AG04449 (cell line): ENCODE measurements at regions of chr12 and their contacts with region 1.

Region 1: GRCh38 chr12:49644620-49644994 is 21.2 kb downstream of the PRPF40B start:
- DNase-seq: no peak
- H3K4me3 ChIP-seq: no peak overlapping the region
- CTCF ChIP-seq: peak; percentile 88

Region 2: DNA sequence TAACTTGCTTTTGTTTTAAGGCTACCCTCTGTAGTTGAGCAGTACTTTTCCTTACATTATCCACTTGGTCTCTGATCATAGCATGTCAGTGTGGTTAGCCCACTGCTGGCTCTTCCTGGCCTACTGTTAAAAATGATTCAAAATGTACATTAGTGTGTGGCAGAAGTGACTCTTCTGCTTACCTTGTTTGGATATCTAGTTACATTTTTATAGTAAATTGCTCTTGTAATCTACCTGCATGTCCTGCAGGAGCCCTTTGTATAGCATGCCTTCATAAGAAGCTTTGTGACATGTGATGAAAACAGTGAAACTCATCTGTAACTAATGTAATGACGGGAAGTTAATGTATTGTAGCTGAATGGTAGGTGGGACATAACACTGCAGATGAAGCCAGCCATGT is 269.2 kb before region 1 on chr12:
- CTCF ChIA-PET with region 1: no interaction called
- POLR2A ChIA-PET with region 1: no interaction called
- DNase-seq: no peak
- H3K4me3 ChIP-seq: no peak overlapping the region
- CTCF ChIP-seq: no peak

Region 3: GRCh38 chr12:49655595-49656236 is 11.1 kb after region 1 on chr12:
- CTCF ChIA-PET with region 1: interaction called, 300 read pairs
- POLR2A ChIA-PET with region 1: no interaction called
- DNase-seq: no peak
- H3K4me3 ChIP-seq: no peak overlapping the region
- CTCF ChIP-seq: no peak

Region 4: GRCh38 chr12:49673446-49674317 is 29.1 kb after region 1 on chr12:
- CTCF ChIA-PET with region 1: interaction called, 20 read pairs
- POLR2A ChIA-PET with region 1: interaction called, 5 read pairs
- DNase-seq: no peak
- H3K4me3 ChIP-seq: peak overlapping the region; percentile 16; the same call in 1 of the 2 replicates
- CTCF ChIP-seq: peak; percentile 36

Region 5: DNA sequence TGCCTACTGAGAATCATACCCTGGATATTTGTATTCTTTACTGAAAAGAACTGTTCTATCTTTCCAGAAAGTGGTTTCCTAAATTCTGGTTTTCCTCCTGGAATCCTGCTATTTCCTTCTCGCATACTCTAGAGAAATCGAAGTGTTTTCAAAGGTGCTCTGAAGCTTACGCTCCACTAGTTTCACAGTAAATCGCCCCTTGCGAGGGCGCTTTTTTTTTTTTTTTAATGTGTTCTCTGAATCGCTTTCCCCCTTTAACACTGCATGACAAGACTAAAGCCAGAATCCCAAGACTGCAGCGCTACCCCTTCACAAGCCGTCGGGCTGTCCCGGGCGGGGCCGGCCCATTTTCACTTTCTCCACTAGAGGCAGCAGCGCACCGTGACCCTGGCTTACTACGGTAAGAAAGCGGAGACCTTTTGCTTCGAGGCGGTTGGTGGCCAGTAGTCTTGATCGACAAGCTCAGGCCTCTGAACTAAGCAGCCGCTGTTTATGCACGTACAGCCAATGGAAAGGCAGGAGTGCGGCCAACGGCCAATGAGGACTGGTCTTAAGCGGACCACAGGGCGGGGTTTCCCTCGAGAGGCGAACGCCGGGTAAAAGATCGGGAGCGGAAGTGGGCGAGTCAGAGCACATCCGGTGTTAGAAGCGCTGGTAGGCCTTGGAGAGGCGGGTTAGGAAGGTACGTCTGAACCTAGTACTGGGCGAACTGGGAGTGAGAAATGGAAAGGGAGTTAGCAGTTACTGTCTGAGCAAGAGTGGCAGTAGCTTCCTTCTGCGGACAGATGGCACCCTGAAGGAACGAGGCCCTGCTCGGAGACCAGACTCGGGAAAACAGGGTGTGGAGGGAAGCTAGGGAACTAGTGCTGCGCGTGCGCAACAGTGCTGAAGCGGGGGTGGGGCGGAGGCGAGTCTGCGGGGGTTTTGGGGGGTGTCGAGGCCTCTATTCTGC is 96.6 kb after region 1 on chr12 and contains the start of gene TMBIM6:
- CTCF ChIA-PET with region 1: interaction called, 26 read pairs
- POLR2A ChIA-PET with region 1: interaction called, 12 read pairs
- DNase-seq: peak; percentile 100
- H3K4me3 ChIP-seq: peak within 1 kb of the TSS; percentile 91
- CTCF ChIP-seq: peak; percentile 91

Region 6: DNA sequence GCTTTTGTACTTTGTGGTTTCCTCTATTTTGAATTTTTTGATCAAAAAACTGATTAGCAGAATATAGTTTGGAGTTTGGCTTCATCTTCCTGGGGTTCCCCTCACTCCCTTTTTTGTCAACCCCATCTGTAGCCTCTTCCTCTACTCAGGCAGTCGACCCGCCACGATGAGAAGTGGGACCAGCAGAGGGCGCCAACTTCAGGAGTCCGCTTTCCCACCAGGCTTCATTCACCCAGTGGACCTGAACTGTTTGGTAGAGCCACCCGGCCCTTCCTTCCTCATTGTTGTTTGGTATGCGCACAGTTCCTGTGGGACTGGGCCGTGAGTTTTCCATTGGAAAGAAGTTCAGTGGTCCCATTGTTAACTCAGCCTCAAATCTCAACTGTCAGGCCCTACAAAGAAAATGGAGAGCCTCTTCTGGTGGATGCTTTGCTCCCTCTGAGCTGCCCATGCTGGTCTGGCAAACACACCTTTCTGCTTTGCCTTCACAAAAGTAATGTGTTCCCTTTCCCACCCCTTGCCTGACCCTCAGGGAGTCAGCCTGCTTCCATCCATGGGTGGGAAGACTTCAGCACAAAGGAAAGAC is 118.5 kb after region 1 on chr12:
- CTCF ChIA-PET with region 1: interaction called, 31 read pairs
- POLR2A ChIA-PET with region 1: interaction called, 3 read pairs
- DNase-seq: no peak
- H3K4me3 ChIP-seq: no peak overlapping the region
- CTCF ChIP-seq: peak; percentile 82

Region 7: DNA sequence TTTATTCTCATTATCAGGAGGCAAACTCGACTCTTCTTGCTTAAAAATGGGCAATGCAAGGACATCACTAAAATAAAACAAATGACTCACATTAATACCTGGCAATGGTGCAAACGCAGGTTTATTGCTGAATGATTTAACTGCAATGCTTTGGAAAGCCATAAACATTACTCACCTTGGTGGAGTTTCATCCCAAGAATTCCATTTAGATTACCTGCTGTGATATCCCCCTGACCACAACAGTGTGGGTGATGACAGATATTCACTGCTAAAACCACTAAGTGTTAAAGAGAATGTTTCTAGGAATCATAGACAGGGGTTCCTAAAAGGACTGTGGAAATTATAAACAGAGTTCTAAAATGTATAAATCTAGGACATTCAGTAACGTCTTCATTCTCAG is 1474.1 kb after region 1 on chr12:
- CTCF ChIA-PET with region 1: no interaction called
- POLR2A ChIA-PET with region 1: no interaction called
- DNase-seq: no peak
- H3K4me3 ChIP-seq: no peak overlapping the region
- CTCF ChIP-seq: no peak